ENCODE measurements at regions of chr3 and their contacts with region 1.

Region 1: DNA sequence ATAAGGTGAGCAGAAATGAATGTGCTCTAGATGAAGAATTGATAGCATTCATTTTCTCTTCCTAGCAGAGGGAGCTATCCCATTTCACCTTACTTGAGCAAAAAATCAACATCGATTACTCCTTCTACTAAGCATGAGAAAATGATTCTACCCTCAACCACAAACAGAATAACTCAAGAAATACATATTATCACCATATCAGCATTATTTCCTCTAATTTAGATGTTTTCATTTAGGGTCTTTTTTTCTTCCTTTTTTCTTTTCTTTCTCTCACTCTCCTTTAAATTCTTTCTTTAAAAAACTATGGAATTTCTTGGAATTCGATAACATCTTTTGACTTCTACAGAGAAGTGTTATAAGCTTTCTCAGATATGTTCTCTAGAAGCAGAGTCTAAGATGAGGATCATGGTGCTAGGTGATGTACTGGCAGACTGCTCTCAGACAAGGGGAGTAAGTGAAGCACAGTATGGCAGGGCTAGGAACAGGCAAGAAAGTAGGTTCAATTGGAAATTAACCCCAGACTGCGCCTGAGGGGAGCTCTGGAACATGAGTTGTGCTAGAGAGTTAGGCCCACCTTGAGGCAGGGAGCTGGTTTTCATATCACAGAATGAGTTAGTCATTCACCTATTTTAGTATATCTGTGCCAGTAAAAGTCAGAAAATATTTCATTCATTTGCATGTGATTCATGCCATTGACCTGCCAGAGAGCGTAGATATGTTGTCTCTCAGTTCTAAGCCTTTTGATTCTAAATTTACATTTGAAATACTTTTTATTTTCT is 279.2 kb upstream of the KCNH8 start:
- DNase-seq: peak; percentile 52
- H3K4me3 Mint-ChIP-seq: no peak overlapping the region
- H3K27ac Mint-ChIP-seq: peak overlapping the region; percentile 88
- H3K4me1 Mint-ChIP-seq: peaks cover 42% of the 10 kb centered on the region
- H3K27me3 Mint-ChIP-seq: peaks cover 11% of the 10 kb centered on the region

Region 2: GRCh38 chr3:18513091-18513490 is 356.0 kb before region 1 on chr3:
- CTCF ChIA-PET with region 1: no interaction called
- POLR2A ChIA-PET with region 1: no interaction called
- intact Hi-C with region 1: no loop called
- DNase-seq: no peak
- H3K4me3 Mint-ChIP-seq: no peak overlapping the region
- H3K27ac Mint-ChIP-seq: no peak overlapping the region
- H3K4me1 Mint-ChIP-seq: peaks cover 13% of the 10 kb centered on the region
- H3K27me3 Mint-ChIP-seq: no peaks in the 10 kb centered on the region

Region 3: GRCh38 chr3:18717598-18717997 is 151.5 kb before region 1 on chr3:
- CTCF ChIA-PET with region 1: no interaction called
- POLR2A ChIA-PET with region 1: no interaction called
- intact Hi-C with region 1: loop called (anchors 5 kb)
- DNase-seq: no peak
- H3K4me3 Mint-ChIP-seq: no peak overlapping the region
- H3K27ac Mint-ChIP-seq: peak overlapping the region; percentile 91
- H3K4me1 Mint-ChIP-seq: peaks cover 73% of the 10 kb centered on the region
- H3K27me3 Mint-ChIP-seq: no peaks in the 10 kb centered on the region

Region 4: DNA sequence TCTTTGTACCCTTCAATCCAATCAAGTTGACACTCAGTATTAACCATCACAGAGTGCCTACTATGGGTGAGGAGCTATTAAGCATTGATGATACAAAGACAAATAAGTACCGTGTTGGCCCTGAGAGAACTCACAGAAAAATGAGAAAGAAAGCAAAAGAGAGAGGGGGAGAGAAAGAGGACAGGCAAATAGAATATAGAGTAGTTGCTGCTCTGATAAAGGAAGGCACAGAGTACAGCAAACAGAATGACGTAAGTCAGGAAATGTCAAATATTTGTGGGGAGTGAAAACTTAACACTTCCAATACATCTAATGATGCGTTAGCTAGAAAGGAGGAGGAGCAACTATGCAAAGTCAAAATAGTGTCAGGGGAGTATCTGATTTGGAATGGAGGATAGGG is 41.4 kb before region 1 on chr3:
- CTCF ChIA-PET with region 1: no interaction called
- POLR2A ChIA-PET with region 1: no interaction called
- intact Hi-C with region 1: loop called (anchors 5 kb)
- DNase-seq: no peak
- H3K4me3 Mint-ChIP-seq: no peak overlapping the region
- H3K27ac Mint-ChIP-seq: no peak overlapping the region
- H3K4me1 Mint-ChIP-seq: peaks cover 7% of the 10 kb centered on the region
- H3K27me3 Mint-ChIP-seq: no peaks in the 10 kb centered on the region

Region 5: GRCh38 chr3:18847583-18848197 is 21.4 kb before region 1 on chr3:
- CTCF ChIA-PET with region 1: interaction called, 4 read pairs
- POLR2A ChIA-PET with region 1: no interaction called
- intact Hi-C with region 1: loop called (anchors 1 kb)
- DNase-seq: no peak
- H3K4me3 Mint-ChIP-seq: no peak overlapping the region
- H3K27ac Mint-ChIP-seq: no peak overlapping the region
- H3K4me1 Mint-ChIP-seq: peaks cover 9% of the 10 kb centered on the region
- H3K27me3 Mint-ChIP-seq: peaks cover 3% of the 10 kb centered on the region

Region 6: DNA sequence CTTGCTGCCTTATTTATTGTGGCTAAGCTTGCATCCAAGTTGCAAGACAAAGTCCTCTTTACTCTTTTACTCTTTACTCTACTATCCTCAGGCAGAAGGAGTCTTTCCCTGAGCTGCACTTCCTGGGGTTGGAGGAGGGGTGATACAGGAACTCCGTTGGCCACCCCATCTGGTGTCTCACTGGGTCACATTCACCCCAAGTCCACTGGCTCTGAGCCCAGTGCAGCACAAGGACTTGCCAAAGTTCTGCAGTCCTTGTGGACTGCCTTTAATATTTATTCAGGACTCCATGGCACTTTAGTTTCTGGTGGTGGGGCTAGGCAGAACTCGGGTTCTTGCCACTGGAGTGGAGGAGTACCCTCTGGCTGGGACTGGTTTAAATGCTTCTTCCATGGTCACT is 113.8 kb after region 1 on chr3:
- CTCF ChIA-PET with region 1: no interaction called
- POLR2A ChIA-PET with region 1: no interaction called
- intact Hi-C with region 1: no loop called
- DNase-seq: no peak
- H3K4me3 Mint-ChIP-seq: no peak overlapping the region
- H3K27ac Mint-ChIP-seq: no peak overlapping the region
- H3K4me1 Mint-ChIP-seq: no peaks in the 10 kb centered on the region
- H3K27me3 Mint-ChIP-seq: peaks cover 10% of the 10 kb centered on the region

Region 7: GRCh38 chr3:19074257-19074900 is 205.3 kb after region 1 on chr3:
- CTCF ChIA-PET with region 1: no interaction called
- POLR2A ChIA-PET with region 1: no interaction called
- intact Hi-C with region 1: no loop called
- DNase-seq: no peak
- H3K4me3 Mint-ChIP-seq: no peak overlapping the region
- H3K27ac Mint-ChIP-seq: no peak overlapping the region
- H3K4me1 Mint-ChIP-seq: no peaks in the 10 kb centered on the region
- H3K27me3 Mint-ChIP-seq: no peaks in the 10 kb centered on the region